ENCODE measurements at regions of chr7 and their contacts with region 1.

Region 1: GRCh38 chr7:152370297-152370696 is 65.5 kb downstream of the KMT2C start:
- DNase-seq: no peak
- ATAC-seq: no peak
- H3K4me3 ChIP-seq: no peak overlapping the region
- H3K27ac ChIP-seq: no peak overlapping the region
- H3K4me1 ChIP-seq: peaks cover 0 to 59% (median 32%) of the 10 kb centered on the region in 9 donors
- H3K27me3 ChIP-seq: no peaks in the 10 kb centered on the region
- CTCF ChIP-seq: no peak

Region 2: DNA sequence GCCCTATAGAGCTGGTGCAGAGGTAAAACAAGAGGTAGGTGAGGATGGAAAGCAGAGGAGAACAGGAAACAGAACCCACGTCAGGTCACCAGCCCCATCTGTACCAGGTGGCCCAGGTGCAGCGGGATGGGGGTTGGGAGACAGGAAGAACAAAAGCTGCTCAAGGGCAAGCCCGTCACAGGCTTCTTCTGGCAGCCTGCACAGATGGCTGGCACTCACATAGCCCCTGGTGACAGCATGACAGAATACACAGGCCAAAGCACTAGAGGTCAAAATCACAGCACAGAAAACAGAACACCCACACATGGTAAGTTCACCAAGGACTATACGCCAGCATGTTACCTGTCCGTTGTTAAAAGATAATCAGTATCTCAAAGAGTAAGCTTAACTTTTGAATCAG is 218.0 kb before region 1 on chr7:
- intact Hi-C with region 1: no loop called
- DNase-seq: no peak
- ATAC-seq: peak in 3 of 8 donors; percentile 24 to 79 (median 42)
- H3K4me3 ChIP-seq: no peak overlapping the region
- H3K27ac ChIP-seq: no peak overlapping the region
- H3K4me1 ChIP-seq: no peaks in the 10 kb centered on the region
- H3K27me3 ChIP-seq: no peaks in the 10 kb centered on the region
- CTCF ChIP-seq: no peak

Region 3: GRCh38 chr7:152424348-152425108 is 54.2 kb after region 1 on chr7:
- intact Hi-C with region 1: loop called in 1 of 10 experiments (anchors 10 kb)
- DNase-seq: no peak
- ATAC-seq: peak in 3 of 8 donors; percentile 33 to 71 (median 71)
- H3K4me3 ChIP-seq: no peak overlapping the region
- H3K27ac ChIP-seq: no peak overlapping the region
- H3K4me1 ChIP-seq: peaks cover 8 to 61% (median 45%) of the 10 kb centered on the region in 9 donors
- H3K27me3 ChIP-seq: no peaks in the 10 kb centered on the region
- CTCF ChIP-seq: no peak

Region 4: GRCh38 chr7:152436111-152436930 is 66.0 kb after region 1 on chr7:
- intact Hi-C with region 1: loop called in 1 of 10 experiments (anchors 10 kb)
- DNase-seq: peak; percentile 94 to 96
- ATAC-seq: peak; percentile 87 to 94 (median 88)
- H3K4me3 ChIP-seq: peak overlapping the region; percentile 41 to 99 (median 78)
- H3K27ac ChIP-seq: peak overlapping the region; percentile 93 to 100 (median 98)
- H3K4me1 ChIP-seq: peaks cover 0 to 33% (median 28%) of the 10 kb centered on the region in 9 donors
- H3K27me3 ChIP-seq: no peaks in the 10 kb centered on the region
- CTCF ChIP-seq: no peak

Region 5: GRCh38 chr7:152556013-152556755 is 185.9 kb after region 1 on chr7:
- intact Hi-C with region 1: no loop called
- DNase-seq: no peak
- ATAC-seq: no peak
- H3K4me3 ChIP-seq: no peak overlapping the region
- H3K27ac ChIP-seq: no peak overlapping the region
- H3K4me1 ChIP-seq: no peaks in the 10 kb centered on the region
- H3K27me3 ChIP-seq: peaks cover 0 to 3% (median 0%) of the 10 kb centered on the region in 7 donors
- CTCF ChIP-seq: no peak